ENCODE measurements at regions of chr1 and their contacts with region 1.

Region 1: DNA sequence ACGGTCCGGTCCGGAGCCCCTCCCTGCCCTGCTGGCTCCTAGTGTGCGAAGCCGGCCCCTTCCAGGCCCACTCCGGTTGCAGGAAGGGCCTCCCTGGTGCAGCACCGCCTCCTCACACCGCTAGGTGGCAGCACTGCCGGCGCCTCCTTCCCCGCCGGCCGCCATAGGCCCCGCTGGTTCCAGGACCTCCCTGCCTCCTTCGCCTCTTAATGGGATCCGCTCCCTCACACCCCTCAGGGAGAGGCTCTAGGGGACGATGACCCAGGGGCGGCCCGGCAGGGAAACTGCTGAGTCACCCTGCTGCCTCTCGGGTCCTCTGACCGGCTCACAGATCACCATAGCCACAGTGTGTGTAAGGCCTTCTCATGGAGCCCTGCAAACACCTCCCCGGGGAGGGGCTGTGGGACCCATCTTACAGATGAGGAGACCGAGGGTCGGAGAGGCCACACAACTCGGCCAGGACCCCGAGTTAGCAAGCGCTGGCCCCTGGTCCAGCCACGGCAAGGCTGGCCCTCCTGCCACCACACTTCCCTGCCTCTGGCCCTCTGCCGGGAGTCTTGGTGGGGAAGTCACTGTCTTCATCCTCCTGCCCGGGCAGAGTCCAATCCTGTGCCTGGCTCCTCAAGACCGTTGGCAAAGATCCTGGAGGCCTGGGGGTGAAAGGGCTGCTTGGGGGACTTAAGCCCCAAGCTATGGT is 1.6 kb upstream of the AJAP1 start:
- DNase-seq: peak; percentile 20 to 68 (median 43)
- ATAC-seq: no peak
- H3K4me3 ChIP-seq: no peak overlapping the region
- H3K4me3 Mint-ChIP-seq: no peak overlapping the region
- H3K27ac ChIP-seq: no peak overlapping the region
- H3K27ac Mint-ChIP-seq: no peak overlapping the region
- H3K4me1 ChIP-seq: peaks cover 6% of the 10 kb centered on the region
- H3K4me1 Mint-ChIP-seq: peaks cover 8% of the 10 kb centered on the region
- H3K27me3 ChIP-seq: peaks cover 35 to 54% of the 10 kb centered on the region in 2 experiments
- H3K27me3 Mint-ChIP-seq: peaks cover 16% of the 10 kb centered on the region
- CTCF ChIP-seq: peak; percentile 95

Region 2: DNA sequence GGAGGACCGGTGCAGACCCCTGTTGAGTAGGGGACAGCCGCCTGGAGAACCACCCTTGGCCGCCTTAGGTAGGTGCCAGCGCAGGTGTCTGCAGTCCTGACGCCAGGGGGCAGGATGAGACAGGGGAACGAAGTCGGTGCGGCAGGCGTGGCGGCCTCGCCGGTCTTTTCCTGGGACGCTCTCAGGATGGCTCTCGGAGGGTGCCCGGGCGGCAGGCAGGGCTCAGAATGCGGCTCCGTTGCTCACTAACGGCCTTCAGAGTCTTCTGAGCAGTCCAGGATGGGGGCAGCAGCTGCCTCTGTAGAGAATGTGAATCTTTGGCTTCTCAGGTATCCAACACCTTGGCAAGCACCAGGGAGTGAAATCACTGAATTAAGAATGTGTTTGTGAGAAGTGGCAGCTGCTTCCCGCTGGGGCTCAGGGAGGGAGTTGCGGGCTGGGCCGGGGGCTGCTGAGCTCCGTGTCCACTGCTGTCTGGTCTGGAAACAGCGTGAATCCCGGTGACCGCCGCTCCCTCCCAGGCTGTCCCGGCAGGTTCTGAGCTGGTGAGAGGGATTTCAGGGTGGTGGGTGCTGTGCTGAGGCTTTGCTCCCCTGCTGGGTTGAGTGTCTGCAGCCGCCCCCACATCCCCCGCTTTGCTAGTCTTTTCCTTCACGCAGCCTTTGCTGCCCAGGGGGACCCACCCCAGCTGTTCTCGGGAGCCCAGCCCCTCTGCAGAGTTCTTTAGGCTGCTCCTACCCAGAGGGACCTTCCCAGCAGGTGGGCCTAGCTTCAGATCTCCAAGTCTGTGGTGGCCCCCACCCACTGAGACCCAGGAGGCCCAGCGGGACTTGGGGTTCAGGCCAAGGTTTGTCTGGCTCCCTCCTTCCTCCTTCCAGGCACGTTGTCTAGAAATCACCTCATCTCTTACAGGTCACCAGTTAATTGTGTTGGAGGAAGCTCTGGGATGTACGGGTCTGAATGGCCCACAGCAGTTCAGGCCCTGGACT is 741.6 kb before region 1 on chr1:
- CTCF ChIA-PET with region 1: no interaction called
- POLR2A ChIA-PET with region 1: no interaction called
- intact Hi-C with region 1: loop called in 1 of 2 experiments (anchors 5 kb)
- DNase-seq: peak; percentile 68 to 86 (median 74)
- ATAC-seq: peak; percentile 87
- H3K4me3 ChIP-seq: no peak overlapping the region
- H3K4me3 Mint-ChIP-seq: no peak overlapping the region
- H3K27ac ChIP-seq: no peak overlapping the region
- H3K27ac Mint-ChIP-seq: no peak overlapping the region
- H3K4me1 ChIP-seq: peaks cover 17% of the 10 kb centered on the region
- H3K4me1 Mint-ChIP-seq: peaks cover under 1% of the 10 kb centered on the region
- H3K27me3 ChIP-seq: peaks cover 0 to 2% of the 10 kb centered on the region in 2 experiments
- H3K27me3 Mint-ChIP-seq: no peaks in the 10 kb centered on the region
- CTCF ChIP-seq: peak; percentile 76

Region 3: GRCh38 chr1:4638345-4638729 is 14.4 kb before region 1 on chr1:
- CTCF ChIA-PET with region 1: no interaction called
- POLR2A ChIA-PET with region 1: no interaction called
- intact Hi-C with region 1: no loop called
- DNase-seq: peak in 2 of 14 experiments; percentile 18 to 30
- ATAC-seq: no peak
- H3K4me3 ChIP-seq: no peak overlapping the region
- H3K4me3 Mint-ChIP-seq: no peak overlapping the region
- H3K27ac ChIP-seq: no peak overlapping the region
- H3K27ac Mint-ChIP-seq: no peak overlapping the region
- H3K4me1 ChIP-seq: no peaks in the 10 kb centered on the region
- H3K4me1 Mint-ChIP-seq: no peaks in the 10 kb centered on the region
- H3K27me3 ChIP-seq: no peaks in the 10 kb centered on the region
- H3K27me3 Mint-ChIP-seq: peaks cover 40% of the 10 kb centered on the region
- CTCF ChIP-seq: no peak

Region 4: DNA sequence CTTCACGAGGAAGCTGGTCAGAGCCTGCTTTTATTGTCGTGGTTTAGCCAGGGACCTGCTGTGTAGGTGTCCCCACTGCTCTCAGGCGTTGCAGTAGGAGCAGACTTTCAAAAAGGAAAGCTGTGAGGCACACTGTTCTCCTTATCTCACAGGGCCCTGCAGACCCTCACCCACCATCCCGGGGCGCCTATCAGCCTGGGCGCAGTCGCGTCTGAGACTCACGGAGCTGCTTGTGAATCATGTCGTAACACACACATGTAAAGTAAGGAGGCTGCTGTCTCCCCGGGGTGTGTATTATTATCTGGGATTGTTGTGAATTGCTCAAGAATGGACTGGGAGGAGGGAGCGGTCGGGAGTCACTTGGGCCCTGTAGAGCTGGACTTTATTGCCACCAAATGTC is 19.0 kb after region 1 on chr1:
- CTCF ChIA-PET with region 1: no interaction called
- POLR2A ChIA-PET with region 1: no interaction called
- intact Hi-C with region 1: loop called in 1 of 2 experiments (anchors 1 kb)
- DNase-seq: no peak
- ATAC-seq: no peak
- H3K4me3 ChIP-seq: no peak overlapping the region
- H3K4me3 Mint-ChIP-seq: no peak overlapping the region
- H3K27ac ChIP-seq: no peak overlapping the region
- H3K27ac Mint-ChIP-seq: no peak overlapping the region
- H3K4me1 ChIP-seq: no peaks in the 10 kb centered on the region
- H3K4me1 Mint-ChIP-seq: no peaks in the 10 kb centered on the region
- H3K27me3 ChIP-seq: peaks cover 0 to 5% of the 10 kb centered on the region in 2 experiments
- H3K27me3 Mint-ChIP-seq: peaks cover 10% of the 10 kb centered on the region
- CTCF ChIP-seq: no peak

Region 5: DNA sequence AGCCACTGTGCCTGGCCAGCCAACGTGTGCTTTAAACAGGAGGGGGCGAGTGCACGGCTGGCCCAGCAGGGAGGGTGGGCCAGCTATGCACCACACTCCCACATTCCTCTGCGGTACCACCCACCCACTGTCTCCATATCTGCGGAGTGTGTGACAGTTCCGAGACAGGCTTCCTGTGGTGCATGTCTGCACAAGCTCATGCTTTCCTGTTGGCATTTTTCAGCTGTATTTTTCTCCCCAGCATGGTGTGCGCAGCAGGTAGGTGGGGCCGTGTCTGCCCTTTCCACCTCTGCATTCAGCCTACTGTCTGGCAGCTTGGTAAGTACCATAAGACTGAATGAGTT is 185.0 kb after region 1 on chr1:
- CTCF ChIA-PET with region 1: no interaction called
- POLR2A ChIA-PET with region 1: no interaction called
- intact Hi-C with region 1: no loop called
- DNase-seq: no peak
- ATAC-seq: no peak
- H3K4me3 ChIP-seq: no peak overlapping the region
- H3K4me3 Mint-ChIP-seq: no peak overlapping the region
- H3K27ac ChIP-seq: no peak overlapping the region
- H3K27ac Mint-ChIP-seq: no peak overlapping the region
- H3K4me1 ChIP-seq: no peaks in the 10 kb centered on the region
- H3K4me1 Mint-ChIP-seq: no peaks in the 10 kb centered on the region
- H3K27me3 ChIP-seq: peaks cover 0 to 3% of the 10 kb centered on the region in 2 experiments
- H3K27me3 Mint-ChIP-seq: peaks cover 15% of the 10 kb centered on the region
- CTCF ChIP-seq: no peak

Region 6: DNA sequence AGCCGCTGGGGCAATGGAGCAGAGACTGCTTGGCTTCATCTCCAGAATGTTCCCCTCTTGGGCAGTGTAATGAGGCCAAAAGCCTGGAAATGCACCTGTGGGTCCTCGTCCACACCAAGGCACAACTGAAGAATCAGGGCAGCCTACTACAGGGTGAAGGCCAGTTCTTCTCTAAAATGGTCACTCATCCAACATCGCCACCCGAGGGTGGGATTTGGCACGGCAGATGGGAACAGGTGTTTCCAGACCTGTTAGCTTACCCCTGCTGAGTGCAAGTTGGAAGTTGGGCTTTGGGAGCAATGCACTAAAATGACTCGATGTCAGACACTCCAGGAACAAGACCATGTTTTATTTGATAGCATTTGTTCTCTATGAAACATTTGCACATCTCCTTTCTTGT is 795.7 kb after region 1 on chr1:
- CTCF ChIA-PET with region 1: no interaction called
- POLR2A ChIA-PET with region 1: no interaction called
- intact Hi-C with region 1: loop called in 1 of 2 experiments (anchors 5 kb)
- DNase-seq: peak in 12 of 14 experiments; percentile 3 to 50 (median 23)
- ATAC-seq: no peak
- H3K4me3 ChIP-seq: no peak overlapping the region
- H3K4me3 Mint-ChIP-seq: no peak overlapping the region
- H3K27ac ChIP-seq: no peak overlapping the region
- H3K27ac Mint-ChIP-seq: no peak overlapping the region
- H3K4me1 ChIP-seq: no peaks in the 10 kb centered on the region
- H3K4me1 Mint-ChIP-seq: no peaks in the 10 kb centered on the region
- H3K27me3 ChIP-seq: peaks cover 0 to 3% of the 10 kb centered on the region in 2 experiments
- H3K27me3 Mint-ChIP-seq: peaks cover 7% of the 10 kb centered on the region
- CTCF ChIP-seq: peak; percentile 15

Region 7: GRCh38 chr1:5745776-5746610 is 1093.2 kb after region 1 on chr1:
- CTCF ChIA-PET with region 1: no interaction called
- POLR2A ChIA-PET with region 1: no interaction called
- intact Hi-C with region 1: loop called in 1 of 2 experiments (anchors 2 kb)
- DNase-seq: peak; percentile 26 to 74 (median 40)
- ATAC-seq: peak; percentile 41
- H3K4me3 ChIP-seq: no peak overlapping the region
- H3K4me3 Mint-ChIP-seq: no peak overlapping the region
- H3K27ac ChIP-seq: no peak overlapping the region
- H3K27ac Mint-ChIP-seq: no peak overlapping the region
- H3K4me1 ChIP-seq: peaks cover 4% of the 10 kb centered on the region
- H3K4me1 Mint-ChIP-seq: no peaks in the 10 kb centered on the region
- H3K27me3 ChIP-seq: peaks cover 6 to 13% of the 10 kb centered on the region in 2 experiments
- H3K27me3 Mint-ChIP-seq: peaks cover 32% of the 10 kb centered on the region
- CTCF ChIP-seq: peak; percentile 74

Region 8: DNA sequence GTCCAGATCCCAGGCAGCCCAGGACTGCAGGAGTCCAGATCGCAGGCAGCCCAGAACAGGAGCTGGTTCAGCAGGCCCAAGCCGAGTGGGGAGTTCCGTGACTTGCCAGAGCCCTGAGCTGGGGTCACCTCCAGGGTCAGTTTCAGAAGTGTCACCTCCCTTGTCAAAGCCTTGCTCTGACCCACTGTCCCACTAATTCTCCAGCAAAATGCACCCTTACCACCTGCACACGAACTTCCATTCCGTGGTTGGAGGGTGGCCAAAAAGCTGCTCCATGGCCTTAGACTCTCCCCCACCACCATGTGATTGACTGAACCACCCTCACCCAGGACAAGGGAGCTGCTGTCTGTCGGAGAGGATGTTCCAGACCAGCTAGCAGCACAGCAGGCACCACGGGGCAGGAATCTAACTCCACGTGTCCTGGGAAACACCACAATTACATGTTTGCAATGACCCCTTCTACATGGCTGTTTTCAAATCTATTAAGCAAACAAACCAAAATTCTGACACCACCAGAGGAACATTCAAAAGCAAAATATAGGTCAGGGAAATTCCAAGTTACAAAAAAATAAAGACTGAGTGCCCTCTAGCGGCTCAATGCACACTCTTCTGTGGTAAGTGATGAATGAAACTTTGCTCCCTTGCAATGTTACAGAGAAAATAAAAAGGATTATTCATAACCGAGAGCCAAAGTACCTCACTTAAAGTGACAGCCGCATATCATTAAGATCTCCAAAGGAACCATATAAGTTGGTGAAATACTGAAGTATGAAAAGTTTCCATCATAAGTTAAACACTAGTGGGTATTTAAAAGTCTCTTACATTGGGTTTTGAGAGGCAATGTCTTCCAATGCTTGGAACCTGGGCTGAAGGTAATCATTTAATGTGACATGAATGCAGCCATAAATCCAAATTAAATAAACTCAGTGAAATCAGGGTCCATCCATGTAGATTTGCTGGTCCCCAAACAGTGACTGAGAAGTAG is 1263.1 kb after region 1 on chr1:
- CTCF ChIA-PET with region 1: no interaction called
- POLR2A ChIA-PET with region 1: no interaction called
- intact Hi-C with region 1: loop called (anchors 5 kb)
- DNase-seq: peak in 7 of 14 experiments; percentile 7 to 65 (median 39)
- ATAC-seq: peak; percentile 52
- H3K4me3 ChIP-seq: no peak overlapping the region
- H3K4me3 Mint-ChIP-seq: no peak overlapping the region
- H3K27ac ChIP-seq: no peak overlapping the region
- H3K27ac Mint-ChIP-seq: no peak overlapping the region
- H3K4me1 ChIP-seq: peaks cover 4% of the 10 kb centered on the region
- H3K4me1 Mint-ChIP-seq: peaks cover 6% of the 10 kb centered on the region
- H3K27me3 ChIP-seq: no peaks in the 10 kb centered on the region
- H3K27me3 Mint-ChIP-seq: no peaks in the 10 kb centered on the region
- CTCF ChIP-seq: peak; percentile 66

Region 9: DNA sequence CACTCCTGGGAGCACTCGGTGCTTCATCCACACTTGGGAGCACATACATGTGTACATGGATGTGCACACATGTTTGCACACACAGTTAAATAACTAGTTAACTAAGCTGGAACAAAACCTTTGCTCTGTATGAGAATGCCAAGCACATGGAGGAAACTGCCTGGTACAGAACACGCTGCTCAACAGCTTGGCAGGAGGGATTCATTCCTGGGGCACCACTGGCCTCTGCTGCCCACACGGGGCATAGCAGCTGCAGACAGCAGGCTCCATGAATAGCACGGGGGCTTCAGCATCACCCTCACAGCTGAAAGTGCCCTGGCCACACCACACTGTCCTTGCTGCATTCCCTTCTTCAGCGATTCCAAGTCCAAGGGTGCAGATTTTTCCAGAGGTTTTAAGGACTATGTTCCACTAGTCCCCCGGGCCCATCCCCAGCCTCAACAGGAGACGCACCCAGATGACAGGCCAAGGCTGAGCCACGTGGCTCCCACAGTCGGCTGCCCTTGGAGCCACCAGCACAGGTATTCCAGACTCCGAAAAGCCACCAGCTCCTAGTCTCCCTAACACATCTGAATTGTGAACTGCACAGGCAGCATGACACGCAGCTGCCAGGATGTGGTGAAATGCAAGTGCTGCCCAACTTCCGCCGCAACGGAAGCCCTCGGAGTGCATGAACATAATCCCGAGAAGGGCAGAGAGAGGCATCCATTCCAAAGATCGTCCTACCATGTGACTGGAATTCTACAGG is 1322.5 kb after region 1 on chr1:
- CTCF ChIA-PET with region 1: no interaction called
- POLR2A ChIA-PET with region 1: no interaction called
- intact Hi-C with region 1: loop called in 1 of 2 experiments (anchors 10 kb)
- DNase-seq: peak in 9 of 14 experiments; percentile 28 to 68 (median 40)
- ATAC-seq: peak; percentile 76
- H3K4me3 ChIP-seq: no peak overlapping the region
- H3K4me3 Mint-ChIP-seq: no peak overlapping the region
- H3K27ac ChIP-seq: no peak overlapping the region
- H3K27ac Mint-ChIP-seq: no peak overlapping the region
- H3K4me1 ChIP-seq: peaks cover 4% of the 10 kb centered on the region
- H3K4me1 Mint-ChIP-seq: peaks cover 3% of the 10 kb centered on the region
- H3K27me3 ChIP-seq: no peaks in the 10 kb centered on the region
- H3K27me3 Mint-ChIP-seq: no peaks in the 10 kb centered on the region
- CTCF ChIP-seq: peak; percentile 38

Measured in CD4-positive, alpha-beta T cell (primary cell).